PC-3 (cell line): ENCODE measurements at regions of chr20 and their contacts with region 1.

Region 1: GRCh38 chr20:20360464-20360863 is 7.4 kb upstream of the INSM1 start:
- DNase-seq: peak; percentile 89
- ATAC-seq: peak; percentile 93
- H3K4me3 ChIP-seq: no peak overlapping the region
- H3K27ac ChIP-seq: no peak overlapping the region
- H3K4me1 ChIP-seq: peaks cover 5% of the 10 kb centered on the region; the same call in 1 of the 2 replicates
- H3K27me3 ChIP-seq: peaks cover 45% of the 10 kb centered on the region
- CTCF ChIP-seq: peak; percentile 95

Region 2: GRCh38 chr20:20102716-20103258 is 257.7 kb before region 1 on chr20:
- CTCF ChIA-PET with region 1: no interaction called
- POLR2A ChIA-PET with region 1: no interaction called
- intact Hi-C with region 1: no loop called
- DNase-seq: no peak
- ATAC-seq: no peak
- H3K4me3 ChIP-seq: no peak overlapping the region
- H3K27ac ChIP-seq: no peak overlapping the region
- H3K4me1 ChIP-seq: no peaks in the 10 kb centered on the region
- H3K27me3 ChIP-seq: peaks cover 87% of the 10 kb centered on the region
- CTCF ChIP-seq: no peak

Region 3: DNA sequence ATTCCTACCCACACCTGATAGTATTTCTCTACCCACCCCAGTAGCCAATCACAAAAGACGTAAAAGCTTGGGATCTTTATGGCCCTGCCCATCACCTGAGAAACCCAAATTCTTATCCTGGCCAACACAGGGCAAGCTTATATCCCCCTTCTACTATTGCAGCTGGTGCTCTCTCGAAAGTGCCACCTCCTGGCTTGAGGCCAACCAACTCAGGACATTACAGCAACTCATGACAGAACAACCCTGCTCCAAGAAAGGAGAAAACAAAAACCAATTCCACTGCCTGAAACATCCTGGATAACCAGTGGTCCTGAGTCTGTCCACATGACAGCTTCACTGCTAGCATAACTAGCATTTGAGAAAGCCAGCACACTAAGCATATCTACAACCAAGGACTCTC is 210.2 kb before region 1 on chr20:
- CTCF ChIA-PET with region 1: no interaction called
- POLR2A ChIA-PET with region 1: no interaction called
- intact Hi-C with region 1: no loop called
- DNase-seq: no peak
- ATAC-seq: no peak
- H3K4me3 ChIP-seq: no peak overlapping the region
- H3K27ac ChIP-seq: no peak overlapping the region
- H3K4me1 ChIP-seq: no peaks in the 10 kb centered on the region
- H3K27me3 ChIP-seq: peaks cover 17% of the 10 kb centered on the region
- CTCF ChIP-seq: no peak

Region 4: DNA sequence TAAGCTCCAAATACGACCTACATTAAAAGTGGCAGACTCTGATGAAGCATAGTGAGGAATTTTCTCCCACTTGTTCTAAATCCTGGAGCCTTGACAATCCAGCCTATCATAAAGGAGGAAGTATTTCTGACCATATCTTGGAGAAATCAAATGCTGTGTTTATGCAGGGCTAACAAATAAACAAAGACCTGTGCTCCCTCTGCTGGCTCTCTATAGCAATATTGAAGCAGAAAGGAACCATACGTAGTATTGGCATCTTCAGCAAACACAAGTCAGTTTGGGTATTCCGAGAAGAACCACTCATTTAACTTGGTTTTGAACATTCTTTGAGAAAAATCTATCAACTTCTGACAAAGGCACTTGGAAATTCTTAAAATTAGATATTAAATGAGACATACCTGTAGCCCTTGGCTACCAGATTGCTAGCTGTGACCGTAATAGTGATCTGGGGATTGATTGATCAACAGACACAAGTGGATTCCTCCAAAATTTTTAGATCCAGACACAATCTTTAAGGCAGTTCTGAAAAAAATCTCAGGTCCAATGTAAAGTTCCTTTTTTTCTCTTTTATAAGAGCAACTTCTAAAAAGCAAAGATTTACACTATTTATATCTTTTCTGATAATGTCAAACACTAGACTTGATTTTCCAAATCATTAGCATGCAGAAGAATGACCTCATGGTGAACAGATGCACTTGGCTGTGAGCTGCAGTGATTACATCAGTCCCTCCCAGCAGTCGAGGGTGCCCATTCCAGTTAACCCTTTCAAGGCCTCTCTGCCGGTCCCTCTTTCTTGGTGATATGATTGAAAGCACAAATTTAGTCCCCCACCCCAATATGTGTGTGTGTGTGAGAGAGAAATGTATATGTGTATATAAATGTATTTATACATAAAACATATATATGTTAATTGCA is 47.7 kb after region 1 on chr20:
- CTCF ChIA-PET with region 1: interaction called, 3 read pairs
- POLR2A ChIA-PET with region 1: no interaction called
- intact Hi-C with region 1: loop called (anchors 1 kb)
- DNase-seq: peak; percentile 61
- ATAC-seq: peak; percentile 89
- H3K4me3 ChIP-seq: no peak overlapping the region
- H3K27ac ChIP-seq: no peak overlapping the region
- H3K4me1 ChIP-seq: no peaks in the 10 kb centered on the region
- H3K27me3 ChIP-seq: no peaks in the 10 kb centered on the region
- CTCF ChIP-seq: peak; percentile 79

Region 5: DNA sequence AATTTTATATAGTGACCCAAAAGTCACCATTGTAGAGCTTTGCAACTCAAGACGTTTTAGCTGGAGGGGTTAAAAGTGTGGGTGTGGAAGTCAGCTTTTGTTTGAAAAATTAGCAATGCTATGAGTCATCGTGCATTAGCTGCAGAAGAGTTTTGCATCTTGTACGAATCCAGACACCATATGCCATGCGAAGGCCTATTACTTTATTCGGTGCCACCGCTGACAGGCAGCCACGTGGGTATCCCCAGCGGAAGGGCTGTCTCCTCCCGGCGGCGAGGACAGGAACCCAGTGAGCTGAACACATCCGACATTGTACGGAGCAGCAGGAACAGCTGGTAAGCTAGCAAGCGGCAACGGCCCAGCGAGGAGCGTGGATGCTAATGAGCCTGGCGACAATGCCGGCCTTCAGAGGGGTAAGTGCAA is 91.8 kb after region 1 on chr20:
- CTCF ChIA-PET with region 1: no interaction called
- POLR2A ChIA-PET with region 1: no interaction called
- intact Hi-C with region 1: loop called (anchors 5 kb)
- DNase-seq: peak; percentile 89
- ATAC-seq: peak; percentile 94
- H3K4me3 ChIP-seq: no peak overlapping the region
- H3K27ac ChIP-seq: no peak overlapping the region; the same call in 1 of the 2 replicates
- H3K4me1 ChIP-seq: peaks cover 34% of the 10 kb centered on the region
- H3K27me3 ChIP-seq: no peaks in the 10 kb centered on the region
- CTCF ChIP-seq: 0 out of 2 replicates have a peak, but pooled peaks have one; percentile 19

Region 6: DNA sequence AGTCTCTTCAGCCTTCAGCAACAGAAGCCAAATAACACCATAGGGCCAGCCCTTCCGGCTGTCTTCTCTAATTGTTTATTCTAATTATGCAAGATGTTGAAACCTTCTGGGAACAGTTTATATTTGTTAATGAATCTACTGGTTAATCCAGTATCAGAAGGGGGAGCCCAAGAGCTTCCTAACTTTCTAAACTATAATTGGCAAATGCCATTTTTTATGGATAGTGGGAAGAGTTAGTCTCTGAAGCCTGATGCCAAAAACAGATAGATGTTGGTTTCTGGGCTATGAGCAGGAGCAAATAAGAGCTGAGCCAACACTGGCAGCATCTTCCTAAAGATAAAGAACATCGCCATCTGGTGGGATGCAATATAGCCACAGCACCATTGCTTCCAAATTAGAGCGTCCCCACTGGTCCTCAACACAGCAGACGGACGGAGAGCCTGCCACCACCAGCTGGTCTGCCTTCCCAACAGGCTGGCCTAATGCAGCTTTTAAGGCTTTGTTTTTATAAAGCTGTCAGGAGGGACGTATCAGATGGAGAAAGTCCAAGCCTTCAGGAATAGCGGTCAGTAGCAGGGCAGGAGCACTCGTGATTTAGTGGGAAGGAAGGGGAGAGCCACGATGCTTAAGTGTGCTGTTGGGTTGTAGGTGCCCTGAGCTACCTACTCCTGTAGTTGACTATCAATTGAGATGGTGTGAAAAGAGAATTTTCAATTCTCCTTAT is 233.1 kb after region 1 on chr20:
- CTCF ChIA-PET with region 1: interaction called, 10 read pairs
- POLR2A ChIA-PET with region 1: no interaction called
- intact Hi-C with region 1: loop called (anchors 1 kb)
- DNase-seq: peak; percentile 62
- ATAC-seq: peak; percentile 81
- H3K4me3 ChIP-seq: no peak overlapping the region
- H3K27ac ChIP-seq: no peak overlapping the region
- H3K4me1 ChIP-seq: no peaks in the 10 kb centered on the region
- H3K27me3 ChIP-seq: no peaks in the 10 kb centered on the region
- CTCF ChIP-seq: peak; percentile 86